Vagina (tissue), 2 donors: ENCODE measurements at regions of chr14 and their contacts with region 1.

Region 1: DNA sequence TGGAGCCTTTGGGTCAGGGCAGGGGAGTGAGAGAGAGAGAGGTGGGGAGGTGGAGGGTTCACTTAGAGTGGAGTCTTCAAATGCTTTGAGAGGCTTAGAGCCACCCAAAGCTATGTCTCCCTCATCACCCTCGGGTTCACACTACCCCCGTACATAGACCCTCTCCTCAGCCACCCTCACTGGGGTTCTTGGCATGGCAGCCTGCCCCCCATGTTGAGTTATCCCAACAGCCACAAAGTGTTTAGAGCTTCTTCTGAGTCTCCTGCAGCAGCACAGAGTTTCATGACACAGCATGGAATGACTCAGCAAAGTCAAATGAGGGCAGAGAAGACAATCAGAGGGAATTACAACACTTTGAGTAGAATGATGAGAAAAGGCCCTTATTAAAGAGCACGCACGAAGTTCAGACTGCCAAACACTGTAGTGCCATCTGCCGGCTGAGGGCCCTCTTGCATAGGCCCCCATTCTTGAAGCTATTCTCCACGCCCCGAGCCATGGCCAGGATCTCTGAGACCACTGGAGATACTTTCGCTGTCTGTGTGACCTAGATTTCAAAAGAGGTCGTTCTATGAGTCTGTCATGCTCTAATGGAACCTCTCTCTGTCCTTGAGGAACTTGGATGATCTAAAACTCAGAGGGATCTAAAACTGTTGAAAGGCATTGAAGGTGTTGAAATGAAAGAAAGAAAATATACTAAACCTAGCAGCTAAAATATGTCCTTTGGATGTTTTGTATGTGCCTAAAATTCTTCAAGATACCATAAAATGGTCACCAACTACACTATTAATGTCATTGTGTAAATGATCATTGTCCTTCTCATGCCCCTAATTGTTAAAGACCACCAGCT is 221.9 kb downstream of the PELI2 start:
- DNase-seq: peak in 1 of 2 donors; percentile 91
- H3K4me3 ChIP-seq: no peak overlapping the region
- H3K27ac ChIP-seq: no peak overlapping the region
- H3K4me1 ChIP-seq: peaks cover 25% of the 10 kb centered on the region
- H3K27me3 ChIP-seq: no peaks in the 10 kb centered on the region
- CTCF ChIP-seq: peak in 2 of 3 experiments; percentile 83 to 87
- POLR2A ChIP-seq: no peak

Region 2: DNA sequence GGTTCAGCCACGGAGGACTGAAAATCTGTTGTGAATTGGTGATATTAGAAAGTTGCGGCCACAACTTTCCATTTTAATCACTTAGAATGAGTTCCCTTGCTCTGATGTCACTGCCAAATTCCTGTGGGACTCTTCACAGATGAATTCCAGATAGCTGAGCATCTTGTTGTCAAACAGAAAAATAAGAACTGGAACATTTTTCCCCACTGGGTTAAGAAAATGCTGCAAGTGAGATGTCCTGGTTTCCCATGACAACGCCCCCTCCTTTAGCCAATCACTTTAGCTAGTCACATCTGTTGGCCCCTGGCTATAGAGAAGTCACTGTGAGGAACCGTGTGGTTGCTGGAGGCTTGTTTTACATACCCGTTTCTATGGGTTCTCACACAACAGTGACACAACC is 624.2 kb before region 1 on chr14:
- intact Hi-C with region 1: loop called (anchors 10 kb)
- DNase-seq: peak in 1 of 2 donors; percentile 83
- H3K4me3 ChIP-seq: no peak overlapping the region
- H3K27ac ChIP-seq: no peak overlapping the region
- H3K4me1 ChIP-seq: no peaks in the 10 kb centered on the region
- H3K27me3 ChIP-seq: no peaks in the 10 kb centered on the region
- CTCF ChIP-seq: no peak
- POLR2A ChIP-seq: no peak

Region 3: DNA sequence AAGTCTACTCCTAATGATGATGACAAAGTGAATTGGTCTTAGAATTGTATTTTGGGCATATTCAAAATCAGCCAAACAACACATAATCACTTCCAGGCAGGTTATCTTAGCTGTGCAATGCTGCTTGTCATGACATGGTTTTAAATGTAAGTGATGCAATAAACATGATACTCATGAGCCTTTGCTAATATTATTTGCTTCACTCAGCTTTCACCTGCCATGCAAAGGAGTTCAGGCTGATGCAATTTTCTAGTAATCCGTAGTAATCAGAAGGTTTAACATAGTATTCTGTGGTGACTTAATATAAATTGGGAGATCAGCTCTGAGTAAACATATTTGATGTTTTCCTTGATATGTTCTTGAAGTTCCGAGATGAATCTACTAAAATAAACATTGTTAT is 268.6 kb after region 1 on chr14:
- intact Hi-C with region 1: no loop called
- DNase-seq: no peak
- H3K4me3 ChIP-seq: no peak overlapping the region
- H3K27ac ChIP-seq: no peak overlapping the region
- H3K4me1 ChIP-seq: no peaks in the 10 kb centered on the region
- H3K27me3 ChIP-seq: no peaks in the 10 kb centered on the region
- CTCF ChIP-seq: no peak
- POLR2A ChIP-seq: no peak